ENCODE measurements at regions of chr12 and their contacts with region 1.

Region 1: GRCh38 chr12:32377344-32378055 is 21.9 kb upstream of the FGD4 start:
- DNase-seq: no peak
- H3K4me3 ChIP-seq: no peak overlapping the region
- H3K27ac ChIP-seq: no peak overlapping the region
- H3K4me1 ChIP-seq: no peaks in the 10 kb centered on the region
- H3K27me3 ChIP-seq: no peaks in the 10 kb centered on the region
- CTCF ChIP-seq: no peak

Region 2: DNA sequence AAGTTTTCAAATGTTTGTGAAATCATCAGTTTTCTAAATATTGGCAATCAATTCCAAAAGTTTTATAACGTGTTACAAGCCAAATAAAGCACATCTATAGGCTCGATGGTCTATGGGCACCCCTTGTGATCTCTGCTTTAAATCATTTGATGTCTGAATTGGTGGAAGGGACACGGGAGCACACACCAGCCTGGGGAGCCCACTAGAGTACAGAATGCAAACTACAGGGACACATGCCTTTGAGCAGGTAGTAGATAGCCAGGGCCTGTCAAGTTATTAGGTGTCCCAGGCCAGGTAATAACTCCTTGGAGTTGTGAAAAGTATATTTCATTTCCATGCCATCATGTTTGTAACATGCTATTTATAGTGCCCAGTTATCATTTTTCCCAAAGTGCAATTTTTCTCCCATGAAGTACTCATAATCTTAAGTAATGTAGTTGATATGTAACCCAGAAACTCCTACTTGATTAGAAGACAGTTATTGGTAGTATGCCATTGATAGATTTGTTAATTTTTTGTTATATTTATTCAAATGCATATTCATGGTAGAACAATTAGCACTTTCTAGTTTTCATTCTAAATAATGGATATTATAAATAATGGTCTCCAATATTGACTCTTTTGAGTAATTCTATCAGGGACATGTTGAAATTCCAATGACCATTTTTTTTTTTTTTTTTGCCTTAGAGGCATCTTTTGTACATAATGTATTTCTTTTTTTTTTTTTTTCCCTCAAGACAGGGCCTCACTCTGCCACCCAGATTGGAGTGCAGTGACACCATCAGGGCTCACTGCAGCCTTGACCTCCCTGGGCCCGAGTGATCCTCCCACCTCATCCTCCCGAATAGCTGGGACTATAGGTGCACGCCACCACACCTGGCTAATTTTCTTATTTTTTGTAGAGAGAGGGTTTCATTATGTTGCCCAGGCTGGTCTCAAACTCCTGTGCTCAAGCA is 75.0 kb before region 1 on chr12:
- CTCF ChIA-PET with region 1: no interaction called
- POLR2A ChIA-PET with region 1: no interaction called
- intact Hi-C with region 1: no loop called
- DNase-seq: no peak
- H3K4me3 ChIP-seq: no peak overlapping the region
- H3K27ac ChIP-seq: no peak overlapping the region
- H3K4me1 ChIP-seq: peaks cover 10% of the 10 kb centered on the region
- H3K27me3 ChIP-seq: no peaks in the 10 kb centered on the region
- CTCF ChIP-seq: peak; percentile 54

Region 3: GRCh38 chr12:32650508-32650907 is 273.0 kb after region 1 on chr12:
- CTCF ChIA-PET with region 1: interaction called, 11 read pairs
- POLR2A ChIA-PET with region 1: no interaction called
- intact Hi-C with region 1: no loop called
- DNase-seq: peak; percentile 28 to 67
- H3K4me3 ChIP-seq: no peak overlapping the region
- H3K27ac ChIP-seq: peak overlapping the region; percentile 51
- H3K4me1 ChIP-seq: peaks cover 15% of the 10 kb centered on the region
- H3K27me3 ChIP-seq: no peaks in the 10 kb centered on the region
- CTCF ChIP-seq: no peak

Measured in PC-9 (cell line).